GM12878 (cell line): ENCODE measurements at regions of chr10 and their contacts with region 1.

Region 1: GRCh38 chr10:88835096-88835909 is 16.3 kb downstream of the ANKRD22 start:
- DNase-seq: peak; percentile 59
- ATAC-seq: peak; percentile 96
- H3K4me3 ChIP-seq: no peak overlapping the region
- H3K27ac ChIP-seq: no peak overlapping the region
- H3K4me1 ChIP-seq: peaks cover 11% of the 10 kb centered on the region
- H3K27me3 ChIP-seq: no peaks in the 10 kb centered on the region
- CTCF ChIP-seq: peak; percentile 78 to 97 (median 91)
- EP300 ChIP-seq: no peak
- POLR2A ChIP-seq: no peak
- RAD21 ChIP-seq: peak; percentile 99

Region 2: GRCh38 chr10:88810196-88810961 is 24.9 kb before region 1 on chr10:
- CTCF ChIA-PET with region 1: interaction called, 15 read pairs
- POLR2A ChIA-PET with region 1: no interaction called
- RAD21 ChIA-PET with region 1: interaction called, 5 read pairs
- SMC1A ChIA-PET with region 1: interaction called, 3 read pairs
- in situ Hi-C with region 1: no loop called
- intact Hi-C with region 1: no loop called
- DNase-seq: no peak
- ATAC-seq: peak; percentile 91
- H3K4me3 ChIP-seq: no peak overlapping the region
- H3K27ac ChIP-seq: no peak overlapping the region
- H3K4me1 ChIP-seq: no peaks in the 10 kb centered on the region
- H3K27me3 ChIP-seq: peaks cover 0 to 2% of the 10 kb centered on the region in 2 experiments; a peak in 2 of 4 replicates
- CTCF ChIP-seq: peak; percentile 70 to 77 (median 75)
- EP300 ChIP-seq: no peak
- POLR2A ChIP-seq: no peak
- RAD21 ChIP-seq: peak; percentile 79

Region 3: DNA sequence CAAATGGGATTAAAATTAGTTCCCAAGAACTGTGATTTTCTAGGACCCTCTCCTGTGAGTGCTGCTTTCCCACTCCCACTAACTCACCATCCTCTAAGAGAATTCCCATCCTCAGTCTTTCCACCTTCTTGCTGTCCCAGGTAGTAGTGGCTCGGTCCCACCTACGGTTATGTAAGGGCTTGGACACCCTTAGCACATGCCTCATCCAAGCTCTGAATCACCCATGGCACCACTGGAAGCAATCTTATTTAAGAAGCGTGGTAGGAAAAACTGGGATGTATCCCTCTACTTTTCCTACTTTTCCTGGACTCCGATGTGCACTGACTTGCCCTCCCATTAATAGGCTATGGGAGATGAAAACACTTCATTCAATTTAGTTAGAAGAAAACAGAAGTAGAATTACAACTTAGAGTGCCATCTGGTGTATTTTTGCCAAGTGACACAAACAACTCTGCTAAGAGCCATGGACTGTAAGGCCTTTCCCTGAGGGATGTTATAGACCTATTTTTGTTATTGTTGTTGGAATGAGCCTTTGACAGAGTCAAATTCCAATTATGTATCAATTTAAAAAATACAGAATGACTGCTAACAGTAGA is 30.1 kb after region 1 on chr10:
- CTCF ChIA-PET with region 1: interaction called, 160 read pairs
- POLR2A ChIA-PET with region 1: interaction called, 3 read pairs
- RAD21 ChIA-PET with region 1: interaction called, 18 read pairs
- SMC1A ChIA-PET with region 1: interaction called, 82 read pairs
- in situ Hi-C with region 1: no loop called
- intact Hi-C with region 1: loop called (anchors 1 kb)
- DNase-seq: no peak
- ATAC-seq: peak; percentile 63; the same call in 2 of the 3 replicates
- H3K4me3 ChIP-seq: no peak overlapping the region
- H3K27ac ChIP-seq: no peak overlapping the region
- H3K4me1 ChIP-seq: no peaks in the 10 kb centered on the region
- H3K27me3 ChIP-seq: no peaks in the 10 kb centered on the region
- CTCF ChIP-seq: peak in 2 of 3 experiments; percentile 24 to 38; a peak in 3 of 6 replicates
- EP300 ChIP-seq: no peak
- POLR2A ChIP-seq: no peak
- RAD21 ChIP-seq: peak; percentile 55; the same call in 1 of the 2 replicates

Region 4: GRCh38 chr10:88908194-88908593 is 72.9 kb after region 1 on chr10:
- CTCF ChIA-PET with region 1: interaction called, 93 read pairs
- POLR2A ChIA-PET with region 1: no interaction called
- RAD21 ChIA-PET with region 1: interaction called, 13 read pairs
- SMC1A ChIA-PET with region 1: interaction called, 111 read pairs
- in situ Hi-C with region 1: no loop called
- intact Hi-C with region 1: no loop called
- DNase-seq: no peak
- ATAC-seq: peak; percentile 48; the same call in 2 of the 3 replicates
- H3K4me3 ChIP-seq: no peak overlapping the region
- H3K27ac ChIP-seq: no peak overlapping the region
- H3K4me1 ChIP-seq: no peaks in the 10 kb centered on the region
- H3K27me3 ChIP-seq: no peaks in the 10 kb centered on the region
- CTCF ChIP-seq: no peak
- EP300 ChIP-seq: no peak
- POLR2A ChIP-seq: no peak
- RAD21 ChIP-seq: no peak

Region 5: GRCh38 chr10:88990384-88991160 is 155.3 kb after region 1 on chr10 and contains the start of gene FAS:
- CTCF ChIA-PET with region 1: interaction called, 52 read pairs
- POLR2A ChIA-PET with region 1: interaction called, 4 read pairs
- RAD21 ChIA-PET with region 1: interaction called, 34 read pairs
- SMC1A ChIA-PET with region 1: interaction called, 71 read pairs
- in situ Hi-C with region 1: no loop called
- intact Hi-C with region 1: loop called (anchors 2 kb)
- DNase-seq: peak; percentile 80
- ATAC-seq: peak; percentile 75
- H3K4me3 ChIP-seq: peak within 1 kb of the TSS; percentile 83
- H3K27ac ChIP-seq: peak within 1 kb of the TSS; percentile 98
- H3K4me1 ChIP-seq: peaks cover 13% of the 10 kb centered on the region
- H3K27me3 ChIP-seq: no peaks in the 10 kb centered on the region
- CTCF ChIP-seq: no peak
- EP300 ChIP-seq: peak in 1 of 2 experiments; percentile 32; a peak in 1 of 4 replicates
- POLR2A ChIP-seq: peak; percentile 86
- RAD21 ChIP-seq: no peak
- polyA plus RNA-seq, gene FAS: 50.1 to 54.9 TPM

Region 6: DNA sequence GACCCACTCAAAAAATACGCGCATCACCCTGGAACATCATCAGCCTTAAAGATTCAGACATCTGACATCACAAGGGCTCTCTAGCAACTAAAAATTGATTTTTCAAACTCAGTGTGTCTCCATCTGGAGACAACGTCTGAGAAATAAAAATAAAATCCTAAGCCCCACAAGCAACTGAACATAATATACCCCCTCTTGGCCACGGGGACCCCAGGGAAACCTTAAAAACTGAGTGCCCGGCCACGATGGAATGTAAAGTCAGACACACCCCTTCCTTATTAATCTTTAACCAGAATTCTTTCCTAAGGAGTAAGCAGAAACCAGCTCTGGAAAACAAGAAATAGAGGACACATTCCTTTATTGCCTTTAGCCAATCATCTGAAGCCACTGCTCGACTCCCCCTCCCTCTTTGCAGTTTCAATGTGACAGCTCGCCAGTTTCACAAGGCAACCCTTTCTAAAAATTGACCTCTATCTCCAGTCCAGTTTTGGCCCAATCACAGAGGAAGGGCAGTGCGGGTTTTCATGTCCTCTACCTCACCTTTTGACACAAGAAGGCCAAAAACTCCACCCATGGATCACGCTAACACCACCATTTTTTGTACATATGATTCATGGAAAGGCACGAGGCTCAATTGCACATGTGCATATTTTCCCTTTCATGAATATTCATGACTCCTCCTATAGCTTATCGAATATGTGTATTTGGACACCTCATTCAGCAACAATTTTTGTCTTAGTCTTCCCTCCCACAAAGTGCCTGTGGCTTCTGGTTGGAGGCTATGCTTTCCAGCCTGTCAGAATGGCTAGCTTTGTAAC is 516.7 kb after region 1 on chr10:
- CTCF ChIA-PET with region 1: no interaction called
- POLR2A ChIA-PET with region 1: no interaction called
- RAD21 ChIA-PET with region 1: no interaction called
- SMC1A ChIA-PET with region 1: no interaction called
- in situ Hi-C with region 1: no loop called
- intact Hi-C with region 1: no loop called
- DNase-seq: no peak
- ATAC-seq: peak; percentile 84
- H3K4me3 ChIP-seq: no peak overlapping the region
- H3K27ac ChIP-seq: peak overlapping the region; percentile 51
- H3K4me1 ChIP-seq: peaks cover 44% of the 10 kb centered on the region
- H3K27me3 ChIP-seq: no peaks in the 10 kb centered on the region
- CTCF ChIP-seq: no peak
- EP300 ChIP-seq: no peak
- POLR2A ChIP-seq: no peak
- RAD21 ChIP-seq: no peak